CD4-positive, alpha-beta T cell (primary cell): ENCODE measurements at regions of chr2 and their contacts with region 1.

Region 1: DNA sequence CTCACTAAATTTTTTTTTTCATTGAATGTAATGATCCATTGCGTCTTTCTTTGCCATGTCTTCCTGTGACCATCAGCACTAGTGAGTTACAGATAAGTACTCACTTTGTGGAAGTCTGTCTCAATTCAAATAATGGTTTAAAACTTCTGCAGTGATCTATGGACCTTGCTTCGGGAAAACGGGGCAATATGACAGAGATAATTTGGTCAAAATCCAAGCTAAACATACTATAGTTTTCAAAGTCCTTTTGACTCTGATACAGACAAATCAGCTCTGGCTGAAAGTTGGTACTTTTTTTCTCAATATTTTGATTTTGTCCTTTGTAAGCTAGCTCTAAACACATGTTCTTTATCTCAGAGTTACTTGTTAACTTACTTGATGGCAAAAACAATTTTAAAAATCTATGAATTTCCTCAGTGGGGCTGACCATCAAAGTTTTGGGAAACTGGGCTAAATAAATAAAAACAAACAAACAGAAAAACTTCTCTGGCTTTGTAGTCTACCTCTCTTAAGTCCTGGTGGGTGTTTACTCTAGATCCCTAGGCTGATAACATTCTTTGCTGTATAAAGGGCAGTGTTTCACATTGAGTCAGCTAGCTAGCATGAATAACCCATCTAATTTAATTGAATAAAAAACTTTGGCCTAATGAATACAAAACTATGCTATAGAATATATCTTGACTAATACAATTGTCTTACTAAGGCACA is 327.6 kb downstream of the RDH14 start:
- DNase-seq: no peak
- ATAC-seq: no peak
- H3K4me3 ChIP-seq: no peak overlapping the region
- H3K4me3 Mint-ChIP-seq: no peak overlapping the region
- H3K27ac ChIP-seq: no peak overlapping the region
- H3K27ac Mint-ChIP-seq: no peak overlapping the region
- H3K4me1 ChIP-seq: no peaks in the 10 kb centered on the region
- H3K4me1 Mint-ChIP-seq: no peaks in the 10 kb centered on the region
- H3K27me3 ChIP-seq: no peaks in the 10 kb centered on the region
- H3K27me3 Mint-ChIP-seq: peaks cover 8% of the 10 kb centered on the region
- CTCF ChIP-seq: no peak

Region 2: GRCh38 chr2:17757321-17757720 is 475.6 kb before region 1 on chr2:
- CTCF ChIA-PET with region 1: no interaction called
- POLR2A ChIA-PET with region 1: no interaction called
- intact Hi-C with region 1: no loop called
- DNase-seq: no peak
- ATAC-seq: no peak
- H3K4me3 ChIP-seq: no peak overlapping the region
- H3K4me3 Mint-ChIP-seq: no peak overlapping the region
- H3K27ac ChIP-seq: no peak overlapping the region
- H3K27ac Mint-ChIP-seq: no peak overlapping the region
- H3K4me1 ChIP-seq: peaks cover 11% of the 10 kb centered on the region
- H3K4me1 Mint-ChIP-seq: peaks cover 16% of the 10 kb centered on the region
- H3K27me3 ChIP-seq: no peaks in the 10 kb centered on the region
- H3K27me3 Mint-ChIP-seq: no peaks in the 10 kb centered on the region
- CTCF ChIP-seq: no peak

Region 3: GRCh38 chr2:18194161-18194560 is 38.7 kb before region 1 on chr2:
- CTCF ChIA-PET with region 1: no interaction called
- POLR2A ChIA-PET with region 1: no interaction called
- intact Hi-C with region 1: no loop called
- DNase-seq: no peak
- ATAC-seq: no peak
- H3K4me3 ChIP-seq: no peak overlapping the region
- H3K4me3 Mint-ChIP-seq: no peak overlapping the region
- H3K27ac ChIP-seq: no peak overlapping the region
- H3K27ac Mint-ChIP-seq: no peak overlapping the region
- H3K4me1 ChIP-seq: no peaks in the 10 kb centered on the region
- H3K4me1 Mint-ChIP-seq: no peaks in the 10 kb centered on the region
- H3K27me3 ChIP-seq: no peaks in the 10 kb centered on the region
- H3K27me3 Mint-ChIP-seq: peaks cover 21% of the 10 kb centered on the region
- CTCF ChIP-seq: no peak

Region 4: DNA sequence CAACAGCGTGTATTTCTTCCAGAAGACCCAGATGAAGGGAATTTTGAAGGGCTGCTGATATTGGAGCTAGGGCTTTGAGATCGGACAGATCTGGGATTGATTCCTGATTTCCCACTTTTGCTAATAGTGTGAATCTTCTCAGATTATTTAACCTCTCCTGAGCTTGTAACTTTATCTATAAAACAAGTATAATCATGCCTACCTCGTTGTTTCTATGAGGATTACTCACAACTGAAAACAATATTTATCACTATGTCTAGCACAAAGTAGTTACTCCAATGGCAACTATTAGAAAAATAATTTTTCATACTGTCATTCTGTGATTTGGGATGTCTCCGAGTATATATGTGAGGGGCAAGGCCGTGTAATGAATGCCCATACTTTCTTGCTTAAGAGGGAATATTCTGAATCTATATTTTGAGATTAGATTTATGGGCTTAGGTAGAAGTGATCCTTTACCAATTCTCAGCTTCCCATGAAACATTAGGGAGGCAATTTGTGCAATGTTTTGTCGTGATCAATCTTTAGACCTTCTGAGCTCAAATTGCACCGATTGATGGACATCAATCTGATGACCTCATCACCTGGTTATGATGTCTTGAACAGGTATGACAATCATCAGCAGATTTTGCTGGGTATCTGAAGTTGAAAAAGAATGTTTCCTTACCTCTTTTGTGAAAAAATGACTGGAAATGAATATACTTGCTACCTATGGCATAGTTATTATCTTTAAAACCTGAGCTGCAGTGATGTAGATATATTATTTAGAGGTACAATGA is 14.5 kb before region 1 on chr2:
- CTCF ChIA-PET with region 1: no interaction called
- POLR2A ChIA-PET with region 1: no interaction called
- intact Hi-C with region 1: loop called in 1 of 2 experiments (anchors 1 kb)
- DNase-seq: no peak
- ATAC-seq: no peak
- H3K4me3 ChIP-seq: no peak overlapping the region
- H3K4me3 Mint-ChIP-seq: no peak overlapping the region
- H3K27ac ChIP-seq: no peak overlapping the region
- H3K27ac Mint-ChIP-seq: no peak overlapping the region
- H3K4me1 ChIP-seq: no peaks in the 10 kb centered on the region
- H3K4me1 Mint-ChIP-seq: no peaks in the 10 kb centered on the region
- H3K27me3 ChIP-seq: no peaks in the 10 kb centered on the region
- H3K27me3 Mint-ChIP-seq: no peaks in the 10 kb centered on the region
- CTCF ChIP-seq: no peak